ENCODE measurements at regions of chr10 and their contacts with region 1.

Region 1: DNA sequence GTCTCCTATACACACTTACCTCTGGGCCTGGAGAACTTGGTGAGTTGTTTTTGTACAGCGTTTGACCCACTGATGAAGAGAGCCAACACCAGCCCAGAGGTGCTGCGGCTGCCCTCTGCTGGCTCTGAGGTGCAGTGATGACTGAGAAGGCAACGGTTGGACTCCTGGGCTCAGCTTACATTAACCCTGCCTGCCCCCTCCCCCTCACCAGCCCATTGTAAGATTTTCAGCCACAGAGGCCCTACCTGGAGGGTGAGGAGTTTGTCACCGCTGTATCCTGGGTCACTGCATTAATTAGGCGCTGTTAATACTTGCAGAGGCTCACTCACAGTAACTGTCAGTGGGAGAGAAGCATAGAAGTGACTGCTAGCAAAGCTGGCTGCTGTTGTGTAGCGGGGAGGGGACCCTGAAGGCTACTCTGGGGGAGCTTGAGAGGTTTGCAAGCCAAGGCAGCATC is 19.0 kb upstream of the ANKRD2 start:
- DNase-seq: peak; percentile 81
- ATAC-seq: peak; percentile 91
- H3K4me3 Mint-ChIP-seq: peak overlapping the region; percentile 25; the same call in 1 of the 2 replicates
- H3K27ac Mint-ChIP-seq: peak overlapping the region; percentile 96
- H3K4me1 Mint-ChIP-seq: peaks cover 37% of the 10 kb centered on the region
- H3K27me3 Mint-ChIP-seq: no peaks in the 10 kb centered on the region
- CTCF ChIP-seq: no peak

Region 2: GRCh38 chr10:97292097-97292862 is 261.3 kb before region 1 on chr10 and contains the start of gene ARHGAP19:
- CTCF ChIA-PET with region 1: no interaction called
- POLR2A ChIA-PET with region 1: no interaction called
- DNase-seq: peak; percentile 93
- ATAC-seq: peak; percentile 98
- H3K4me3 Mint-ChIP-seq: peak within 1 kb of the TSS; percentile 83
- H3K27ac Mint-ChIP-seq: peak within 1 kb of the TSS; percentile 97
- H3K4me1 Mint-ChIP-seq: peaks cover 18% of the 10 kb centered on the region
- H3K27me3 Mint-ChIP-seq: no peaks in the 10 kb centered on the region
- CTCF ChIP-seq: no peak
- total RNA-seq, gene ARHGAP19: 35.5 to 42.2 TPM (median 38.0 TPM) in 3 replicates

Region 3: GRCh38 chr10:97498076-97498840 is 55.3 kb before region 1 on chr10 and contains the start of gene MMS19:
- CTCF ChIA-PET with region 1: interaction called, 16 read pairs
- POLR2A ChIA-PET with region 1: interaction called, 6 read pairs
- DNase-seq: peak; percentile 100
- ATAC-seq: peak; percentile 88
- H3K4me3 Mint-ChIP-seq: peak within 1 kb of the TSS; percentile 81
- H3K27ac Mint-ChIP-seq: peak within 1 kb of the TSS; percentile 91
- H3K4me1 Mint-ChIP-seq: peaks cover 59% of the 10 kb centered on the region
- H3K27me3 Mint-ChIP-seq: peaks cover 21% of the 10 kb centered on the region
- CTCF ChIP-seq: no peak
- total RNA-seq, gene MMS19: 135 to 153 TPM (median 141 TPM) in 3 replicates

Region 4: GRCh38 chr10:97534746-97535367 is 18.7 kb before region 1 on chr10:
- CTCF ChIA-PET with region 1: interaction called, 177 read pairs
- POLR2A ChIA-PET with region 1: no interaction called
- DNase-seq: peak; percentile 68
- ATAC-seq: peak; percentile 82
- H3K4me3 Mint-ChIP-seq: no peak overlapping the region
- H3K27ac Mint-ChIP-seq: peak overlapping the region; percentile 86
- H3K4me1 Mint-ChIP-seq: peaks cover 15% of the 10 kb centered on the region
- H3K27me3 Mint-ChIP-seq: no peaks in the 10 kb centered on the region
- CTCF ChIP-seq: peak; percentile 69

Region 5: GRCh38 chr10:97572214-97572989 is 18.8 kb after region 1 on chr10 and contains the start of gene ANKRD2:
- CTCF ChIA-PET with region 1: interaction called, 37 read pairs
- POLR2A ChIA-PET with region 1: no interaction called
- DNase-seq: peak; percentile 88
- ATAC-seq: peak; percentile 92
- H3K4me3 Mint-ChIP-seq: no peak within 1 kb of the TSS
- H3K27ac Mint-ChIP-seq: peak within 1 kb of the TSS; percentile 75
- H3K4me1 Mint-ChIP-seq: peaks cover 5% of the 10 kb centered on the region
- H3K27me3 Mint-ChIP-seq: no peaks in the 10 kb centered on the region
- CTCF ChIP-seq: no peak; the same call in 1 of the 2 replicates
- total RNA-seq, gene ANKRD2: not detected in 3 replicates

Measured in WTC11 (cell line).